Gastrocnemius medialis (tissue), 4 donors: ENCODE measurements at regions of chr19 and their contacts with region 1.

Region 1: GRCh38 chr19:17226002-17226933 is at the start of gene OCEL1:
- DNase-seq: peak; percentile 98 to 99
- ATAC-seq: peak; percentile 96 to 97
- H3K4me3 ChIP-seq: peak within 1 kb of the TSS; percentile 62 to 95 (median 78)
- H3K27ac ChIP-seq: peak within 1 kb of the TSS; percentile 86 to 91 (median 89)
- H3K4me1 ChIP-seq: peaks cover 8 to 13% of the 10 kb centered on the region in 2 donors
- H3K27me3 ChIP-seq: no peaks in the 10 kb centered on the region
- CTCF ChIP-seq: peak in 1 of 5 experiments; percentile 21
- POLR2A ChIP-seq: peak; percentile 88 to 90
- total RNA-seq, gene OCEL1: 3.3 to 5.8 (median 4.5) TPM

Region 2: GRCh38 chr19:16899566-16900075 is 326.6 kb before region 1 on chr19:
- in situ Hi-C with region 1: no loop called
- intact Hi-C with region 1: no loop called
- DNase-seq: no peak
- ATAC-seq: no peak
- H3K4me3 ChIP-seq: no peak overlapping the region
- H3K27ac ChIP-seq: no peak overlapping the region
- H3K4me1 ChIP-seq: peaks cover 0 to 7% of the 10 kb centered on the region in 2 donors
- H3K27me3 ChIP-seq: peaks cover 13 to 23% (median 21%) of the 10 kb centered on the region in 3 donors
- CTCF ChIP-seq: peak in 2 of 5 experiments; percentile 23 to 32
- POLR2A ChIP-seq: no peak

Region 3: GRCh38 chr19:17075035-17075863 is 151.0 kb before region 1 on chr19 and contains the starts of genes HAUS8 and MYO9B:
- in situ Hi-C with region 1: no loop called
- intact Hi-C with region 1: loop called (anchors 1 kb)
- DNase-seq: peak; percentile 98 to 99
- ATAC-seq: peak; percentile 94
- H3K4me3 ChIP-seq: peak within 1 kb of the TSS; percentile 73 to 85 (median 80)
- H3K27ac ChIP-seq: peak within 1 kb of the TSS; percentile 79 to 84 (median 80)
- H3K4me1 ChIP-seq: peaks cover 18 to 33% of the 10 kb centered on the region in 2 donors
- H3K27me3 ChIP-seq: no peaks in the 10 kb centered on the region
- CTCF ChIP-seq: peak in 1 of 5 experiments; percentile 11
- POLR2A ChIP-seq: peak; percentile 62 to 85
- total RNA-seq, gene HAUS8: 0.97 to 4.5 (median 3.3) TPM
- total RNA-seq, gene MYO9B: 20.0 to 22.1 (median 20.7) TPM

Region 4: GRCh38 chr19:17135001-17135853 is 91.0 kb before region 1 on chr19:
- in situ Hi-C with region 1: no loop called
- intact Hi-C with region 1: loop called (anchors 5 kb)
- DNase-seq: peak; percentile 76 to 85
- ATAC-seq: peak; percentile 90 to 96
- H3K4me3 ChIP-seq: peak overlapping the region; percentile 12 to 47 (median 34)
- H3K27ac ChIP-seq: peak overlapping the region; percentile 75 to 82 (median 82)
- H3K4me1 ChIP-seq: peaks cover 33 to 34% of the 10 kb centered on the region in 2 donors
- H3K27me3 ChIP-seq: no peaks in the 10 kb centered on the region
- CTCF ChIP-seq: peak in 4 of 5 experiments; percentile 21 to 48 (median 34)
- POLR2A ChIP-seq: peak in 1 of 2 donors; percentile 37

Region 5: DNA sequence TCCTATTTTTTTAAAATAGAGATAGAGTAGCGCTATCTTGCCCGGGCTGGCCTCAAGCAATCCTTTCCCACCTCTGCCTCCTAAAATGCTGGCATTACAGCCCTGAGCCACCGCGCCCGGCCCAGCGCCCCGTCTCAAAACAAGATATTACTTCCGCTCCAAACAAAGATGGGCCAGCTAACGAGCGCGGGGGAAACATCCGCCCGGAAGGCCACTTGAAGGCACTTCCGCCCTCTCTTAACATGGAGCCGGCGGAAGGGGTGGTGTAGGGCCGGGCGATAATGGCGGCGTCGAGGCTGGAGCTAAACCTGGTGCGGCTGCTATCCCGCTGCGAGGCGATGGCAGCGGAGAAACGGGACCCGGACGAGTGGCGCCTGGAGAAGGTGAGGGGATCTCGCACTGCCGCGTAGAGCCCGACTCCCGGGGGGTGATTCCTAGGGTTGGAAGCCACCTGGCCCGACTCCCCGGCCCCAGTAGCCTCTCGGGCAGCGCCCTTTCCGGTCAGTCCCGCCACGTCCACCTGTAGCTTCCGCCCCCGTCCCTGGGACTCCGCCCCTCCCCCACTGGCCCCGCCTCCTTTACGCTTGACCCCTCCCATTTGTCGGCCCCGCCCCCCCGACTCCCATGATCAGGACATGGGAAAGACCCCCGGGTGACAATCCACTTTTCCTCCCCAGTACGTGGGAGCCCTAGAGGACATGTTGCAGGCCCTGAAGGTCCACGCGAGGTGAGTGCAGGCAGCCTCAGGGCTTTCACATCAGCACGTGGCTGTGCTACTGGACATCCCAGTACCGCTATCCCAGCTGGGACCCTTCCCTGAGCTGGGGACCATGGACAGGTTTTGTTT is 10.9 kb before region 1 on chr19 and contains the start of gene USE1:
- in situ Hi-C with region 1: no loop called
- intact Hi-C with region 1: loop called (anchors 1 kb)
- DNase-seq: peak; percentile 86 to 89
- ATAC-seq: peak; percentile 98 to 99
- H3K4me3 ChIP-seq: peak within 1 kb of the TSS; percentile 81 to 88 (median 84)
- H3K27ac ChIP-seq: peak within 1 kb of the TSS; percentile 85 to 91 (median 89)
- H3K4me1 ChIP-seq: peaks cover 9 to 14% of the 10 kb centered on the region in 2 donors
- H3K27me3 ChIP-seq: no peaks in the 10 kb centered on the region
- CTCF ChIP-seq: no peak
- POLR2A ChIP-seq: peak in 1 of 2 donors; percentile 31
- total RNA-seq, gene USE1: 14.1 to 39.9 (median 22.3) TPM

Region 6: DNA sequence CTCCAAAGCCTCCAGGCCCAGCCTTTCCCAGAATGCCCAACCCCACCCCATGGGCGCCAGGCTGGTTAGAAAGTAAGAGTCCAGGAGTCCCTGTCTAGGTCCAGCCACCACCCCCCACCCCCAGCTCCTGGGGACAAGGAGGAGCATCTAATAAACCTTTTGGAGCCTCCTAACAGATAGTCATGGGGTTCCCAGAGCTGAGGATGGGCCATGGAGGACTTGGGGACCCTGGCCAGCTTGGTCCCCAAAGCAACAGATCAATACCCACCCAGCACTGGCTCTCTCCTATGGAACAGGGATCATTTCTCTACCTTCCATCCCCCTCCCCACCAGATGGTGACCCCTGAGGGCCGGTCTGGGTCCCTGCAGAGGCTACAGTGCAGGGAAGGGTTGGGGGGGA is 10.1 kb after region 1 on chr19:
- in situ Hi-C with region 1: no loop called
- intact Hi-C with region 1: no loop called
- DNase-seq: no peak
- ATAC-seq: no peak
- H3K4me3 ChIP-seq: peak overlapping the region in 1 of 4 donors; percentile 50
- H3K27ac ChIP-seq: peak overlapping the region; percentile 41 to 51 (median 50)
- H3K4me1 ChIP-seq: peaks cover 12 to 24% of the 10 kb centered on the region in 2 donors
- H3K27me3 ChIP-seq: no peaks in the 10 kb centered on the region
- CTCF ChIP-seq: no peak
- POLR2A ChIP-seq: no peak

Region 7: GRCh38 chr19:17246681-17247425 is 20.6 kb after region 1 on chr19:
- in situ Hi-C with region 1: no loop called
- intact Hi-C with region 1: loop called (anchors 1 kb)
- DNase-seq: no peak
- ATAC-seq: peak in 1 of 2 donors; percentile 1
- H3K4me3 ChIP-seq: peak overlapping the region; percentile 54 to 78 (median 69)
- H3K27ac ChIP-seq: peak overlapping the region; percentile 75 to 93 (median 87)
- H3K4me1 ChIP-seq: peaks cover 21 to 26% of the 10 kb centered on the region in 2 donors
- H3K27me3 ChIP-seq: no peaks in the 10 kb centered on the region
- CTCF ChIP-seq: no peak
- POLR2A ChIP-seq: no peak

Region 8: DNA sequence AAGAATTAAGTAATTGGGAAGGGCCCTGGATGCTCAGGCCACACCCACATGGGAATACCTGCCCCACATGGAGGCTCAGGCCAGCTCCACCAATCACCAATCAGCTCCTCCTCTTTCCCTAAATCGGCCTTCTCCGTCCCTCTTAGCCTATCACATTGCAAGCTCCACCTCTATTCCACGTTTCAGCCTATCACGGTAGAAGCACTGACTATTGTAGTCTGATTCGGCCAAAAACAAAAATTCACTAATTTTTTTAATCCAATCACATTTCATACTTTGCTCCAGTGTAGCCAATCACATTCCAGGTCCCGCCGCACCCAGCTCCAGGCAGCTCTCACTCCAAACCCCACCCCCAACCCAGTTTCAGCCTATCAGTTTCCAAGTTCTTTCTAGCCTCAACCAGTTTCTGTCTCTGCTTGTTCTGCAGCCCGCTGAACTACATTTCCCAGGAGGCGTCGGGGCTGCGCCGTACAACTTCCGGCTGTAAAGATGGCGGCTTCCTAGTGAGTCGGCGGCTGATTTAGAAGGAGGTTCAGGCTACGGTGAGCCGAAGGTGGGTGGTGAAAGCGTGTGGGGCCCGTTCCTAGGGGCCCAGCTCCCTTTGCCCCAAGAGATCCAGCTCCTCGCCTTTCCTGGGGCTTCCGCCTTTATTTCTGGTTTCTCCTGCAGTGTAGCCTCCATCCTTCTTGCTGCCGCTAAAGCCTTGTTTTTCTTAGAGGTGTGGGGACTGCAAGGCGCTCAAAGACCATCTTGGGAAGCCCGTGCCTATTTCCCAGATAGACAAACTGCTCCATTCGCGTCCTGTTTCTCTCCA is 40.9 kb after region 1 on chr19 and contains the start of gene BABAM1:
- in situ Hi-C with region 1: no loop called
- intact Hi-C with region 1: loop called (anchors 1 kb)
- DNase-seq: peak; percentile 97
- ATAC-seq: peak; percentile 98 to 99
- H3K4me3 ChIP-seq: peak within 1 kb of the TSS; percentile 83 to 92 (median 89)
- H3K27ac ChIP-seq: peak within 1 kb of the TSS; percentile 77 to 91 (median 86)
- H3K4me1 ChIP-seq: peaks cover 8 to 10% of the 10 kb centered on the region in 2 donors
- H3K27me3 ChIP-seq: no peaks in the 10 kb centered on the region
- CTCF ChIP-seq: no peak
- POLR2A ChIP-seq: peak; percentile 17 to 61
- total RNA-seq, gene BABAM1: 86.3 to 120 (median 99.4) TPM